ENCODE measurements at regions of chr16 and their contacts with region 1.

Region 1: GRCh38 chr16:81715358-81716196 is 63.5 kb upstream of the PLCG2 start:
- DNase-seq: peak; percentile 40
- H3K4me3 Mint-ChIP-seq: peak overlapping the region; percentile 34
- H3K27ac Mint-ChIP-seq: peak overlapping the region; percentile 57
- H3K4me1 Mint-ChIP-seq: peaks cover 44% of the 10 kb centered on the region
- H3K27me3 Mint-ChIP-seq: no peaks in the 10 kb centered on the region

Region 2: DNA sequence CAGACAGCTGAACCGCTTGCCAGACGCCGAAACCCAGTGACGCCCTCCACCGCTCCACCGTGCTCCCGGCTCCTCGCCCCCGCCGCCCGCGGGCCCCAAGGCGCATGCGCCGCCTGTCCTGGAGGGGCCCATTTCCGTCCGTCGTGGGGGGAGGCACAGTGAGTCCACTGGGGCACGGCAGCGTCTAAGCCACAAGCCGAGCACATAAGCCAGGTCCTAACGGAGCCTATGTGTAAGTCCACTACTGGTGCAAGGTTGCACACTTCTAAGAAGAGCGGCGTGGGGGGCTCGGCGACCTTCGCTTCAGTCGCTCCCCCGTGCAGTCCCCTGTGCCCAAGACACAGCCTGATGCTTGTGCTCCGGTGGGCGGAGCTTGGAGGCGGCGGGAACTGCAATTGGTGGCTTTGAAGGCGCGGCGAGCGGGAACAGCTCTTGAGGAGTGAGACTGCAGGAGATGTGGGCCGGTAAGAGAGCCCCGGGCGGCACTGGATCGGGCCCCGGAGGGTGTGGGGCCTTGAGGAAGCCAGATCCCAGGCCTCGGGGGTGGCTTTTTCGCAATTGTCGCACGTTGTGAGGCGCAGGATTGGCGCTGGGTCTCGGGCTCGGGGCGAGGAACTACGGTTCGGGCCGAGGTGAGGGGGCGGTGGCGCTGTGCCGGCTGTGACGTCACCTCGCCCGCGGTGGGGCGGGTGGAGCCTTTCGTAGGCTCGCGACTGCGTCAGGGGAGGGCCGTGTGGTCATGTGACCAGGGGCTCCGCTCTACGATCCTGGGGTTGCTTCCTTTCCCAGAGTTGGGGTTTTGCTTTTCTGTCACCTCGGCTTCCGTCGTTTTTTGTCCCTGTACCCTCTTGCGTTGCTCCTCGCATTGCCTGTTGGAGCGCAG is 708.5 kb before region 1 on chr16 and contains the starts of genes CENPN and CMC2:
- CTCF ChIA-PET with region 1: no interaction called
- POLR2A ChIA-PET with region 1: no interaction called
- intact Hi-C with region 1: loop called (anchors 5 kb)
- DNase-seq: peak; percentile 98
- H3K4me3 Mint-ChIP-seq: peak within 1 kb of the TSS; percentile 88
- H3K27ac Mint-ChIP-seq: peak within 1 kb of the TSS; percentile 98
- H3K4me1 Mint-ChIP-seq: peaks cover 41% of the 10 kb centered on the region
- H3K27me3 Mint-ChIP-seq: no peaks in the 10 kb centered on the region
- total RNA-seq, gene CENPN: 71.9 to 76.0 TPM
- total RNA-seq, gene CMC2: 147 to 148 TPM

Region 3: DNA sequence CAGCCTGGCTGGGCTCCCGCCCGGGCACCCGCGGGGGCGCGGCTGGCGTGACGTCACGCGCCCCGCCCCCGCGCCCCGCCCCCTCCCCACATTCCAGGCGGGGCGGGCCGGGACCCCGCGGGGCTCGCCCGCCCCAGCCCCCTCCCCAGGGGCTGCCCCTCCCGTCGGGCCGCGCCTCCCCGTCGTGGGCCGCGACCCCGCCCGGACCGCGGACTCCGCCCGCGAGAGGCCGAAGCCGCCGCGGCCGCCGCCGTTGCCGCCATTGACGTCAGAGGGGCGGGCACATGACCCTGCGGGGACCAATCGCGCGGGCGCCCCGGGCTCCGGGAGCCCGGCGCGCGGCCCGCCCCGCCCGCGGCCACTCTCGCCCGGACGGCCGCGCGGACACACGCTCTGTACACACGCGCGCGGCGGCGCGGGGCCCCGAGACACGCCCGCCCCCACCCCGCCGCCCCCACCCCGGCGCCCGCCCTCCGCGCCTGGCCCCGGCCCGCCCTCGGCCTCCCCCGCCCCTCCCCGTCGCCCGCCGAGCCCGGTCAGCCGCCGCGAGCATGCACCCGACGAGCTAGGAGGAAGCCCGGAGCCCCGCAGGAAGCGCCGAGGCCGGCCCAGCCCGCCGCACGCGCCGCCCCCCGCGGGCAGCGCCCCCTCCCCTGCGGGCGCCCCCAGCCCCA is 271.0 kb before region 1 on chr16 and contains the start of gene CMIP:
- CTCF ChIA-PET with region 1: no interaction called
- POLR2A ChIA-PET with region 1: no interaction called
- intact Hi-C with region 1: loop called (anchors 5 kb)
- DNase-seq: peak; percentile 84
- H3K4me3 Mint-ChIP-seq: peak within 1 kb of the TSS; percentile 89
- H3K27ac Mint-ChIP-seq: peak within 1 kb of the TSS; percentile 71
- H3K4me1 Mint-ChIP-seq: peaks cover 32% of the 10 kb centered on the region
- H3K27me3 Mint-ChIP-seq: no peaks in the 10 kb centered on the region
- total RNA-seq, gene CMIP: 35.0 to 36.6 TPM

Region 4: GRCh38 chr16:81632392-81633146 is 83.0 kb before region 1 on chr16:
- CTCF ChIA-PET with region 1: no interaction called
- POLR2A ChIA-PET with region 1: no interaction called
- intact Hi-C with region 1: loop called (anchors 1 kb)
- DNase-seq: peak; percentile 92
- H3K4me3 Mint-ChIP-seq: peak overlapping the region; percentile 52
- H3K27ac Mint-ChIP-seq: peak overlapping the region; percentile 94
- H3K4me1 Mint-ChIP-seq: peaks cover 49% of the 10 kb centered on the region
- H3K27me3 Mint-ChIP-seq: no peaks in the 10 kb centered on the region

Region 5: GRCh38 chr16:81696961-81697615 is 18.5 kb before region 1 on chr16:
- CTCF ChIA-PET with region 1: interaction called, 11 read pairs
- POLR2A ChIA-PET with region 1: no interaction called
- intact Hi-C with region 1: no loop called
- DNase-seq: peak; percentile 73
- H3K4me3 Mint-ChIP-seq: no peak overlapping the region
- H3K27ac Mint-ChIP-seq: no peak overlapping the region
- H3K4me1 Mint-ChIP-seq: no peaks in the 10 kb centered on the region
- H3K27me3 Mint-ChIP-seq: no peaks in the 10 kb centered on the region

Region 6: GRCh38 chr16:81730090-81731051 is 14.8 kb after region 1 on chr16:
- CTCF ChIA-PET with region 1: interaction called, 18 read pairs
- POLR2A ChIA-PET with region 1: no interaction called
- intact Hi-C with region 1: no loop called
- DNase-seq: peak; percentile 68
- H3K4me3 Mint-ChIP-seq: peak overlapping the region; percentile 71
- H3K27ac Mint-ChIP-seq: peak overlapping the region; percentile 38
- H3K4me1 Mint-ChIP-seq: peaks cover 15% of the 10 kb centered on the region
- H3K27me3 Mint-ChIP-seq: no peaks in the 10 kb centered on the region

Region 7: GRCh38 chr16:81823111-81823510 is 107.5 kb after region 1 on chr16:
- CTCF ChIA-PET with region 1: no interaction called
- POLR2A ChIA-PET with region 1: no interaction called
- intact Hi-C with region 1: no loop called
- DNase-seq: no peak
- H3K4me3 Mint-ChIP-seq: no peak overlapping the region
- H3K27ac Mint-ChIP-seq: no peak overlapping the region
- H3K4me1 Mint-ChIP-seq: peaks cover 1% of the 10 kb centered on the region
- H3K27me3 Mint-ChIP-seq: no peaks in the 10 kb centered on the region

Region 8: GRCh38 chr16:82031116-82032084 is 315.8 kb after region 1 on chr16:
- CTCF ChIA-PET with region 1: no interaction called
- POLR2A ChIA-PET with region 1: no interaction called
- intact Hi-C with region 1: no loop called
- DNase-seq: no peak
- H3K4me3 Mint-ChIP-seq: no peak overlapping the region
- H3K27ac Mint-ChIP-seq: no peak overlapping the region
- H3K4me1 Mint-ChIP-seq: no peaks in the 10 kb centered on the region
- H3K27me3 Mint-ChIP-seq: peaks cover 12% of the 10 kb centered on the region

Measured in activated CD4-positive, alpha-beta memory T cell treated with anti-CD3 and anti-CD28 coated beads for 36 hours (primary cell).